B cell (primary cell): ENCODE measurements at regions of chr2 and their contacts with region 1.

Region 1: DNA sequence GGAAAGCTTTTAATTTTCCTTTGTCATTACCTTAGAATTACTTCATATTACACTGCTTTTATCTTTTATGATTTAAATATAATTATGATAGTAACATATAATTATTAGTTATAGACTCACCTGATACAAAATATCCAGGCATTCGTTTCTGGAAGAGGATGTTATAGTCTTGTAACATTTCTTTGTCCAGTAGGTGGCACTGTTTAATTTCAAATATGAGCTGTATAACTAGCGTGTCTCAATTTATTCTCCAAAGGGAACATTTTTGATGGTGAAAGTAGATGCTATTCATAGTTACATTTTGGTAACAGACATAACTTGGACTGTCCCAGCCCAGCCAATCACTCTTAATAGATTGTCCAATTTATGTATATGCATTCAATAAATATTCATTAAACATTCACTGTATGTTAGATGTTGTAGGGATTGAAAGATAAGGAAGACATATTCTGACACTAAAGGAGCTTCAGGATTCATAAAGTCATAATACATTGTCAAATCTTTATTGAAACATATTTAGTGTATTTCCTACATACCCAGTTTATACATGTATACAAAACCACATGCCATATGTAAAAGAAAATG is 19.2 kb downstream of the DAW1 start:
- DNase-seq: peak; percentile 51
- ATAC-seq: peak; percentile 47
- H3K4me3 ChIP-seq: no peak overlapping the region
- H3K4me3 Mint-ChIP-seq: no peak overlapping the region
- H3K27ac ChIP-seq: no peak overlapping the region
- H3K27ac Mint-ChIP-seq: no peak overlapping the region
- H3K4me1 ChIP-seq: no peaks in the 10 kb centered on the region
- H3K4me1 Mint-ChIP-seq: no peaks in the 10 kb centered on the region
- H3K27me3 ChIP-seq: no peaks in the 10 kb centered on the region
- H3K27me3 Mint-ChIP-seq: peaks cover 10% of the 10 kb centered on the region
- CTCF ChIP-seq: peak; percentile 87

Region 2: GRCh38 chr2:227880460-227880859 is 10.1 kb before region 1 on chr2:
- CTCF ChIA-PET with region 1: interaction called, 17 read pairs
- POLR2A ChIA-PET with region 1: no interaction called
- intact Hi-C with region 1: no loop called
- DNase-seq: no peak
- ATAC-seq: no peak
- H3K4me3 ChIP-seq: no peak overlapping the region
- H3K4me3 Mint-ChIP-seq: no peak overlapping the region
- H3K27ac ChIP-seq: no peak overlapping the region
- H3K27ac Mint-ChIP-seq: no peak overlapping the region
- H3K4me1 ChIP-seq: peaks cover 0 to 3% of the 10 kb centered on the region in 2 donors
- H3K4me1 Mint-ChIP-seq: peaks cover 12% of the 10 kb centered on the region
- H3K27me3 ChIP-seq: peaks cover 0 to under 1% (median 0%) of the 10 kb centered on the region in 4 experiments
- H3K27me3 Mint-ChIP-seq: peaks cover 7% of the 10 kb centered on the region
- CTCF ChIP-seq: no peak

Region 3: GRCh38 chr2:227903381-227903780 is 12.8 kb after region 1 on chr2:
- CTCF ChIA-PET with region 1: interaction called, 11 read pairs
- POLR2A ChIA-PET with region 1: no interaction called
- intact Hi-C with region 1: no loop called
- DNase-seq: no peak
- ATAC-seq: no peak
- H3K4me3 ChIP-seq: no peak overlapping the region
- H3K4me3 Mint-ChIP-seq: no peak overlapping the region
- H3K27ac ChIP-seq: no peak overlapping the region
- H3K27ac Mint-ChIP-seq: no peak overlapping the region
- H3K4me1 ChIP-seq: no peaks in the 10 kb centered on the region
- H3K4me1 Mint-ChIP-seq: no peaks in the 10 kb centered on the region
- H3K27me3 ChIP-seq: no peaks in the 10 kb centered on the region
- H3K27me3 Mint-ChIP-seq: no peaks in the 10 kb centered on the region
- CTCF ChIP-seq: no peak

Region 4: DNA sequence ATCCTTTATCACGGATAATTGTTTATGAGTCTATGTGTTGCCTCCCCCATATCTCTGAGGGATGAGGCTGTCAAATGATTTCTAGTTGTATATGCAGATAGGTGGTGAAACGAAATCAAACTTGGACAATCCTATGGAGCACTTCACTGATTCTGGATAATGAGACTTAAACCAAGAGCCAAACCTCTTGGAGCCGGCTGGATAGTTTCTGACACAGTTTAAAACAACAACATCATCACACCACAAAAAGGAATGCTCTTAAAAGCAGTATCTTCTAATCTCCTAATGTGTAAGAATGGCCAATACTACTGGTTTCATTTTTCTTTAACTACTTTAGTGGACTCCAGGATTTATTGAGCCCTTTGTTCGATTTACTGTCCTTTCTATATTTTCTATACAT is 254.4 kb after region 1 on chr2:
- CTCF ChIA-PET with region 1: no interaction called
- POLR2A ChIA-PET with region 1: no interaction called
- intact Hi-C with region 1: no loop called
- DNase-seq: no peak
- ATAC-seq: no peak
- H3K4me3 ChIP-seq: no peak overlapping the region
- H3K4me3 Mint-ChIP-seq: no peak overlapping the region
- H3K27ac ChIP-seq: no peak overlapping the region
- H3K27ac Mint-ChIP-seq: no peak overlapping the region
- H3K4me1 ChIP-seq: no peaks in the 10 kb centered on the region
- H3K4me1 Mint-ChIP-seq: no peaks in the 10 kb centered on the region
- H3K27me3 ChIP-seq: no peaks in the 10 kb centered on the region
- H3K27me3 Mint-ChIP-seq: no peaks in the 10 kb centered on the region
- CTCF ChIP-seq: no peak

Region 5: DNA sequence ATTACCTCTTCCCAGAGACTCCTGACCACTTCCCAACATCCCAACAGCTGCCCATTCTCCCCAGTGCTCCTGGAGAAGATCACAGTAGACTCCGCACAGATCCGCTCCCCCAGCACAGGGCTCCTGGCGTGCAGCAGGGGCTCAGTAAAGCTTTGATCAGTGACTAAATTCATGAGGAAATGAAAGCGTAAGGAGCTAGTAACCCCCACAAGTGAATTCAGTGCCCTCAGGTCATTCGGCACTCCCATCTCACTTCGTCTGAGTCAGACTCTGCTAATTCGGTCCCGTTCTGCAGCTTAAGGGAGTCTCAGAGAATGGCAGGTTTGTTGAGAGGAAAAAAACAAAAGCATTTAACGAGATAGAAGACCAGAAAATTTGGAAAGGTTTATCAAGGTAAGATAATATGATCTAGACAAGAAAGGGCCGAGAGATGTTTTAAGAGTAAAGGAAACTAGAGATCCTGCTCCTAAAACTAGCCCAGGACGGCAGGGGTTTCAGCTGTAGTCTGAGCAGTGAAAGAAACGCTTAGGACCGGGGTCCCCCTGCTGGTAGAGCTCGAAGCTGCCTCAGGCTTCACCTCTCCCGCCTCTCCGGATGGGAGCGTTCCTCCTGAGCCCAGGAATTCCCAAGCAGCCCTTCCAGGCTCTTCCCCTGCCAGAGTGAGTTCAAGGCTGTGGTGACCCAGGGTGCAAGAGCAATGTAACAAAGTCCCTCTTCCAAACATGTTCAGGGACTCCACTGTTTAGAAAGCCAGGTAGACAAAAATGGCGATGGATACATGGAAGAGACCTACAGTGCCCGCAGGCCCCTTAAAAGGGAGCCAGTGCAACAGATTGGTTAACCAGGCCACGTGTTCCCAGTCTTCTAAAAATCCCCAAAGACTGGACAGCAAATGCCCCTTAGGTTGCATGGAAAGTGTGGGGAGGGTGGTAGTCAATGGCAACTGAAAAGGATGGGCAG is 1696.4 kb after region 1 on chr2:
- CTCF ChIA-PET with region 1: interaction called, 10 read pairs
- POLR2A ChIA-PET with region 1: no interaction called
- intact Hi-C with region 1: loop called (anchors 5 kb)
- DNase-seq: peak; percentile 23
- ATAC-seq: no peak
- H3K4me3 ChIP-seq: no peak overlapping the region
- H3K4me3 Mint-ChIP-seq: no peak overlapping the region
- H3K27ac ChIP-seq: no peak overlapping the region
- H3K27ac Mint-ChIP-seq: no peak overlapping the region
- H3K4me1 ChIP-seq: no peaks in the 10 kb centered on the region
- H3K4me1 Mint-ChIP-seq: no peaks in the 10 kb centered on the region
- H3K27me3 ChIP-seq: peaks cover 0 to 2% (median 0%) of the 10 kb centered on the region in 4 experiments
- H3K27me3 Mint-ChIP-seq: peaks cover 15% of the 10 kb centered on the region
- CTCF ChIP-seq: peak; percentile 30